BJ (cell line): ENCODE measurements at regions of chr11 and their contacts with region 1.

Region 1: GRCh38 chr11:73288873-73289707 is 17.0 kb downstream of the P2RY6 start:
- DNase-seq: no peak
- H3K4me3 ChIP-seq: no peak overlapping the region
- H3K27me3 ChIP-seq: no peaks in the 10 kb centered on the region
- CTCF ChIP-seq: peak; percentile 96

Region 2: DNA sequence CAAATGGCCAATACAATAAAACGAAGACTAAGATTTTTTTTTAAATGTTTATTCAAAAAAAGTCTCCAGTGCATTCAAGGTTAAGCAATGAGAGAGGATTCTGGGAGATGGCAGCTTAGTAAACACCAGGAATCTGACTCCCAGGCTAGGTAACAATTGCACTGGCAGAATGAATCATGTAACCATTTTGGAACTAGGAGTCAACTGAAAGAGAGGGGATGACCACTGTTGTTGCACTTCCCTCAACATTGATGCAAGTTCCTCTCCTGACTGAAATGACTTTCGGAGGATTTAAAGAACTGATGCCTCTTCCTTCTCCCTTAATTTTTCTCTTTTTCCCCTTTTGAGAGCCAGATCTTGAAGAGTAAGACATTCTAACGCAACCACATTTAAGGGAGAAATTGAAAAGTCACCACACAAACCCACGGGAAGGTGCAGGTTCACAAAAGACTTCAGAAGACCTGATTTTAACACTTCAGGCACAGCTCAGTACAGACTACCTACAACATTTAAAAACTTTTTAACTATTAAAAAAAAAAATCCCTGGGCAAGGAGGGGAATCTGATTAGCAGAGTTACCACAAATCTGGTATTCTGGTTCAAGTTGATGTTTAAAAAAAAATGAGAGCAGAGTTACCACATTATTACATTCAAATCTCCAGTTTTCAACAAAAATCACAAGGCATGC is 203.8 kb before region 1 on chr11:
- CTCF ChIA-PET with region 1: no interaction called
- POLR2A ChIA-PET with region 1: no interaction called
- DNase-seq: no peak
- H3K4me3 ChIP-seq: no peak overlapping the region
- H3K27me3 ChIP-seq: no peaks in the 10 kb centered on the region
- CTCF ChIP-seq: no peak

Region 3: DNA sequence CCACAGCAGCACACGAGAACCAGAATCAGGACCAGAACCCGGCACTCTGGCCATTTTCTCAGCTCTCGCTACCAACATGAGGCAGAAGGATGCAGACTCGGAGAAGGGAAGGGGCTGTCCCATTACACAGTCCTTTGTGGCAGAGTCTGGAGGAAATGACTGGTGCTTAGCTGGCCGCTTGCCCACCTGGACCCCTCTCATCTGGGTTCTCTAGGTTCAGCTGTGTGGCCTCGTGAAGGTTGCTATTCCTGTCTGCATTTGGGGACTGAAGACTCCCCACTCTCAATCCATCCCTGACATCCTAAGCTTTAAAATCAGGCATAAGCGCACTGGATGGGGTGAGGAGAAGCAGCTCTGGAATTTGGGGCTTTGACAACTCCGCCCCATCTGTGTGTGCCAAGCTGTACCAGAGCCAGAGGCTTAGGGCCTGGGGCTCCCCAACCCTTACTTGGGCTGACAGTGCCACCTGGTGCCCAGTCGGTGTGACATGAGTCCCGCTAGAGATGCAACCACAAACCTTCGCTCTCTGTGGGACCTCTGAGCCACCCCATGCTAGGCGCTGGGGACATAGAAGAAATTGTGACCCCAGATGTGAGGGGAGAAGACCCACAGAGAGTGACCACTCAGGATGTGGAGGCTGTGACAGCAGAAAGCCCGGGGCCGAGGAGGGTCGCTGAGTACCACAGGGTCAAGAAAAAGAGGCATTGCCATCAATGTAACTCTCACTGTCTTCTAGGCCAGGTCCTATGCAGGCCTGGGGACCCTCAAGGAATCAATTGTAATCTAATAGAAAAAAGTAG is 111.1 kb before region 1 on chr11:
- CTCF ChIA-PET with region 1: interaction called, 183 read pairs
- POLR2A ChIA-PET with region 1: no interaction called
- DNase-seq: no peak
- H3K4me3 ChIP-seq: no peak overlapping the region
- H3K27me3 ChIP-seq: no peaks in the 10 kb centered on the region; the same call in 1 of the 2 replicates
- CTCF ChIP-seq: peak; percentile 81

Region 4: GRCh38 chr11:73236854-73237253 is 52.2 kb before region 1 on chr11:
- CTCF ChIA-PET with region 1: interaction called, 46 read pairs
- POLR2A ChIA-PET with region 1: no interaction called
- DNase-seq: no peak
- H3K4me3 ChIP-seq: no peak overlapping the region
- H3K27me3 ChIP-seq: no peaks in the 10 kb centered on the region
- CTCF ChIP-seq: peak; percentile 59

Region 5: DNA sequence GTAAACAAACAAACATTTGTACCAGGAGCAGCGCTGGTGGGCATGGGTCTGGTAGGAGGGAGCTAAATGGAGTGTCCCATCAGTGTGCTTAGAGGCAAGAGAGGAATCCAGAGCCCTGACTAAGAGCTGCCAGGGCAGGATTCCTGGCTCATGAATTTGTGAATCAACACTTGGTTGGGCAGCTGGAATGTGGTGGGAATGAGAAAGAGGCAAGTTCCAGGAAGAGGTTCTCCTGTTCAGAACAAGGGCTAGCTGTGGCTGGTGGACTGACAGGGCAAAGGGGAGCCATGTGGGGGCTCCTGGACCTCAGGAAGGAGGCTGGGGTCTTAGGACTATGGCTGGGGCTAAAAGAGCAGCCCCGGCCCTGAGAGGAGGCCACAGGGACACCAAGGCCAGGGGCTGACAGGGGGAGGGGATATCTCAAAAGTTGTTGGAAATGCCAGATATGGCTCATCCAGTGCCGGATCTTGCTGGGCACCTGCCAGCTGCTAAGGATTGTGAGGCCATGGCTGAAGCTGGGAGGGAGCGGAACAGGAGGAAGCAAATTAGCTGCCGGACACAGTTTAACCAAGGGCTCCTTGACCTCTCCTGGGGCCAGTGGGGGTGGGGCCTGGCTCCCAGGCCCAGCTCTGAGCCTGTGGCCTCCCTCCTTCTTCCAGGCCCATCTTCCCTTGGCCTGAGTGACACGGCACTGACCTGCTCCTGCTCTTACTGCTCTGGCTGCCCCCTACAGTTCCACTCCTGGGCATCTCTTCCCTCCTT is 31.6 kb before region 1 on chr11:
- CTCF ChIA-PET with region 1: interaction called, 20 read pairs
- POLR2A ChIA-PET with region 1: no interaction called
- DNase-seq: peak; percentile 78
- H3K4me3 ChIP-seq: no peak overlapping the region
- H3K27me3 ChIP-seq: no peaks in the 10 kb centered on the region
- CTCF ChIP-seq: no peak

Region 6: DNA sequence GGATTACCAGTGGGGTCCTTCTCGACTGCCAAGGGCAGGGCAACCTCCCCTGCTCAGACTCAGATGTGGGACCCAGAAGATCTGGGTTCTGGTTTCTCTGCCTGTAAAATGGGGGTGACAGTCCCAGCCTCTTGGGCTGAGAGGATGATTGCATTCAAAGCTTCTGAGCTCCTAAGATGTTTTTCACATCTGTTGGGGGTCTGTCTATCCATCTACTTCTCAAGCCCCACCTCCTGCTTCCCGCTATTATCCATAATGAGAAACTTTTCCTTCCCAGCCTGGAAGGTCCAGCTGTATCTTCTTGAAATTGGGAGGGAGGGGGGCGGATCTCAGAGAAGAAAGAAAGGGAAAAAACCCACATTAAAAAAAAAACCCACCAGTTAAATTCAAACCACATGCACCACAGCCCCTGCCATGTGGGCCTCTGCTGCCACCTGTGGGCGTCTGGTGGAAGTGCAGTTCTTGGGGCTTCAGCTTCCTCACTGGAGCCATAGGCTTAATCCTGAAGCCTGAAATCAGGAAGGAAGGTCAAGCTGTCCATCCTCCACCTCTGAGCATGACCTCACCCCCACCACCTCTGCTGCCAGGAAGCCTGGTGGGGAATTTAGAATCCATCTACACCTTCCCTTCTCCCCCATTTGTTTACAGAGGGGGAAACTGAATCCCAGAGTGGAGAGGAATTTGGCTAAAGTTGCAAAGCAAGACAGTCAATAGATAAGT is 46.3 kb after region 1 on chr11:
- CTCF ChIA-PET with region 1: interaction called, 114 read pairs
- POLR2A ChIA-PET with region 1: interaction called, 4 read pairs
- DNase-seq: no peak
- H3K4me3 ChIP-seq: no peak overlapping the region
- H3K27me3 ChIP-seq: no peaks in the 10 kb centered on the region
- CTCF ChIP-seq: peak; percentile 98

Region 7: GRCh38 chr11:73393479-73394380 is 104.6 kb after region 1 on chr11:
- CTCF ChIA-PET with region 1: interaction called, 27 read pairs
- POLR2A ChIA-PET with region 1: no interaction called
- DNase-seq: no peak
- H3K4me3 ChIP-seq: no peak overlapping the region
- H3K27me3 ChIP-seq: no peaks in the 10 kb centered on the region
- CTCF ChIP-seq: peak; percentile 88

Region 8: DNA sequence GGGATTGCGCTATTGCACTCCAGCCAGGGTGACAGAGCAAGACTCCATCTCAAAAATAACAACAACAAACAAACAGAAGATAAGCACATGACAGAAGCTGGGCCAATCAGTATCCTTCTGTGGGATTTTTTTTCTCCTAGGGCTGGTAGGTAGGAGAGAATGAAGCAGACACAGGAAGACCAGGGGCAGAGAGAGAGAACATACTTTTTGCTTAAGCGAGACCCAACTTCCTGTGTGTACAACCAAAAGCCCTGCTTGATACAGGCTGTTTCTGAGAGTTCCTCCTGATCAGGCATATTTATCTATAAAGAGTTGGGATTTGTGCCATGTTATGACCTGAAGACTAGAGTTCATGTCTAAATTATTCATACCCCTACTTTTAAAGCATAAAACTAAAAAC is 344.9 kb after region 1 on chr11:
- CTCF ChIA-PET with region 1: no interaction called
- POLR2A ChIA-PET with region 1: no interaction called
- DNase-seq: no peak
- H3K4me3 ChIP-seq: no peak overlapping the region
- H3K27me3 ChIP-seq: peaks cover 1% of the 10 kb centered on the region; the same call in 1 of the 2 replicates
- CTCF ChIP-seq: no peak